Calu3 (cell line): ENCODE measurements at regions of chr22 and their contacts with region 1.

Region 1: DNA sequence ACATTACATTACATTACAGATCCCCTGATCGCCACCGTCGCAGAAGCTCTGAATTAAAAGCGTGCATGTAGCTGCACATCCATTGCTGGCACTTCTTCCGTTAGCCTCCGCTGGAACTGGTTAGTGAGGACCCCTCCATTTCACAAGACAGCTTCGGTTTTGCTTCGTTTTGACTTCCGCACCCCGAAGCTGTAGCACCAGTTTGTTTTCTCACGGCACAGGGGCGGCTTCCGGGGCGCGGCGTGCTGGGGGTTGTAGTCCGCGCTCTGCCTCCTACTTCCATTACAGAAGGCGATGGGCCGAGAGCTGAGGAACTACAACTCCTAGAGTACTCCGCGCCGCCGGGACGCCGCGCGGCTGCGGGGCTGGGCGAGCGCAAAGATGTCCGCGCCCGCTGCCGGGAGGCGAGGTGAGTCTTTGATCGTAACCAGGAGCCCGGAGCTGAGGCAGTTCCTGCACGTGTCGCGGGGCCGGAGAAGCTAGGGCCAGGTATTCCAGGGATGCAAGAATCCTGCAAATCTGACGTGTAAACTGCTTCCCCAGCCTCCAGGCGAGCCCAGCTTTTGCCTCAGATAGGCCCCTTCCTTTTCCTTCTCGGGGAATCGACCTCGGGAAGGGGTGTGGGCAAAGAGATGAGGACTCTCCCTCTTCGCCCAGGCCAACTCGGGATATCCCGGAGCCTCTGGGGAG is at the start of gene PEX26:
- DNase-seq: peak; percentile 95
- H3K4me3 Mint-ChIP-seq: peak within 1 kb of the TSS; percentile 98
- H3K27ac Mint-ChIP-seq: peak within 1 kb of the TSS; percentile 92
- H3K4me1 Mint-ChIP-seq: peaks cover 40% of the 10 kb centered on the region
- H3K27me3 Mint-ChIP-seq: no peaks in the 10 kb centered on the region
- CTCF ChIP-seq: no peak
- total RNA-seq, gene PEX26: 46.1 and 47.0 TPM in 2 replicates

Region 2: DNA sequence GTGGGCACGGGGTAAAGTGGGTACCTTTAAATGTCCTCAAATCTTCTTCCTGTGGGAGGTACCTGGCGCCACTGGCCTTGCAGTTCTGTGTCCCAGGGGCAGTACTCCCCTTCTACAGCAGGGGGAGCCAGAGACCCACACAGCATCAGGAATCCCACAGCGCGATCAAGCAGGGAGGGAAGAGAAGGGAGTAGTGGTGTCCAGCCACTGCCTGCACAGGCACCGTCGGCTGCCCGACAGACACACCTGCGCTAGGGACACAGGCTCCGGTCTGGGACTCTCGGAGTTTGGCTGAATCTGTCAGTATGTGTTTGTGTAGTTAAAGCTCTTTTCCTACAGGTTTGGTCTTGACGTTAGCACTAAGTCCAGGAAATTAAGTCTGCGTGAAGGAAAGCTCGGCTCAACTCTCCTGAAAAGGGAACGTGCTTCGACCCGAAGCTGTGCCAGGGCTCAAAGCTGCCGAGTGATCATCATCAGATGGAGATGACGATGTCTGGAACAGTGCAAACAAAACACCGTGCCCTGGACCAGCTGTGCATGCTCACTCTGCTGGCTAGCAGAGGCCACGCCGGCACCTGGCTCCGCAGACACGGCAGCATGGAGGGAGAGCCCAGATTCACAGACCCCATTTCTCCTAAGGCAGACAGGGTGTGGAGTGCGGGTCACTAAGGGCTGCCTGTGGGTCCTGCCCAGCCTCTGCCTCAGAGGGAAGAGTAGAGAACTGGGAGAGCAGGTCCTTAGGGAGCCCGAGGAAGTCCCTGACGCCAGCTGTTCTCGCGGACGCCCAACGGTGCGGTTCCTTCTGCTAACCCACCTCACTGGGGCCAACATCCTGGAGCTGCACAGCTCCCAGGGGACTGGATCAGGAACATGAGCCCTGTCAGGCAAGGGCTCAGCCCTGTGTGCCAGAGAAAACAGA is 247.5 kb before region 1 on chr22:
- CTCF ChIA-PET with region 1: interaction called, 44 read pairs
- intact Hi-C with region 1: loop called (anchors 1 kb)
- DNase-seq: peak; percentile 91
- H3K4me3 Mint-ChIP-seq: no peak overlapping the region
- H3K27ac Mint-ChIP-seq: no peak overlapping the region
- H3K4me1 Mint-ChIP-seq: no peaks in the 10 kb centered on the region
- H3K27me3 Mint-ChIP-seq: no peaks in the 10 kb centered on the region
- CTCF ChIP-seq: peak; percentile 98

Region 3: GRCh38 chr22:17891481-17892167 is 186.2 kb before region 1 on chr22:
- CTCF ChIA-PET with region 1: interaction called, 5 read pairs
- intact Hi-C with region 1: loop called (anchors 10 kb)
- DNase-seq: no peak
- H3K4me3 Mint-ChIP-seq: no peak overlapping the region
- H3K27ac Mint-ChIP-seq: no peak overlapping the region
- H3K4me1 Mint-ChIP-seq: peaks cover 11% of the 10 kb centered on the region
- H3K27me3 Mint-ChIP-seq: no peaks in the 10 kb centered on the region
- CTCF ChIP-seq: no peak

Region 4: GRCh38 chr22:17920145-17920605 is 157.6 kb before region 1 on chr22:
- CTCF ChIA-PET with region 1: interaction called, 10 read pairs
- intact Hi-C with region 1: loop called (anchors 5 kb)
- DNase-seq: peak; percentile 55
- H3K4me3 Mint-ChIP-seq: peak overlapping the region; percentile 32
- H3K27ac Mint-ChIP-seq: peak overlapping the region; percentile 42
- H3K4me1 Mint-ChIP-seq: peaks cover 54% of the 10 kb centered on the region
- H3K27me3 Mint-ChIP-seq: no peaks in the 10 kb centered on the region
- CTCF ChIP-seq: no peak

Region 5: GRCh38 chr22:18001040-18001893 is 76.5 kb before region 1 on chr22:
- CTCF ChIA-PET with region 1: interaction called, 24 read pairs
- intact Hi-C with region 1: loop called (anchors 2 kb)
- DNase-seq: peak; percentile 91
- H3K4me3 Mint-ChIP-seq: peak overlapping the region; percentile 70
- H3K27ac Mint-ChIP-seq: peak overlapping the region; percentile 91
- H3K4me1 Mint-ChIP-seq: peaks cover 36% of the 10 kb centered on the region
- H3K27me3 Mint-ChIP-seq: no peaks in the 10 kb centered on the region
- CTCF ChIP-seq: peak; percentile 47

Region 6: DNA sequence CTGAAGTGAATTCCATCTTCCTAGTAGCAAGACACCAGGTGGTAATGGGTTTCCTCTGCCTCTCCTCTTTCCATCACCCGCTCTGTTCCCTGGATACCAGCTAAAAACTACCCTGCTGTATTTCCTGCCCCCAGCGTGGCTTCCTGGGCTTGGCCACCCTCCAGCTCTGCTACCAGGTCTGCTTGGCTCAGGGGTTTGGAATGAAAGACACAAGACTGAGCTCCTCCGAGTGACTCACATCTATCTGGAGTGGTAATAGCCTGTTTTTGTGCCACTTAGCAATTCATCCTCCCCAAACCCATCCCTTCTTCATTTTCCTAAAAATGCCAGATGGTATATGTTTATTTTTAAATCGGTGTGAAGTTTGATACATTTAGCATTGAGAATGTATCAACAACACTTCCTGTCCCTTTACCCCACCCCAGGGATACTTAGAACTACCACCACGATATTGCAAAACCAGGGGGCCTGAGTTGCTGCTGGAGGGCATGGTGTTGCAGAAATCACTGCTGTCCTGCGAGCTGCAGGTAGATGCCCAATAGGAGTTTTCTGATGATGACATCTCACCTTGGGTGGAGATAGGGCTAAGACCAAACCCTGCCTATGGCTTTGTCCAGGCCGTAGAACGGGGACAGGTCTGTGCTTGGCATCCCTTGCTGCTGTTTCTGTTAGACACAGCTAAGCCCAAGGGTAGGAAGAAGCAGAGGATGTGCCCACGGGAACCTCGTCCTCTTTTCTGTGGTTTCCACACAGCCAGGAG is 45.9 kb before region 1 on chr22:
- CTCF ChIA-PET with region 1: interaction called, 10 read pairs
- intact Hi-C with region 1: loop called (anchors 5 kb)
- DNase-seq: peak; percentile 87
- H3K4me3 Mint-ChIP-seq: no peak overlapping the region
- H3K27ac Mint-ChIP-seq: peak overlapping the region; percentile 41
- H3K4me1 Mint-ChIP-seq: peaks cover 51% of the 10 kb centered on the region
- H3K27me3 Mint-ChIP-seq: no peaks in the 10 kb centered on the region
- CTCF ChIP-seq: no peak

Region 7: DNA sequence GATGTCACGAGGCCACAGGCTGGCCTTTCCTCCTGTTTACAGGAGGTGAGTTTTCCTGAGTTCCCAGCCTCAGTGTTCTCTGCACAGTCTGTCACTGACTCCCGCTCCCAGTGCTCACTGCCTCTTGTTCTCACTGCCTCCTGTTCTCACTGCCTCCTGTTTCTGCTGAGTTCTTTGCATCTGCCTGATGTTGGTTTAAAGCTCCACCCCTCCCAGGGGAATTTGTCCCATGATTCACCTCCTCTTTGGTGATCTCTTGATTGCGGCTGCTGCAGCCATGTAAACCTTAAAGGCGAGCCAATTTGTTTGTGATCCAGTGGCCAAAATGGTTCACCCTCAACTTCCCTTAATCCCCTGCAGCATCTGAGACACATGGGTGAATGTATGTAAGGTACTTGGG is 26.8 kb after region 1 on chr22:
- CTCF ChIA-PET with region 1: no interaction called
- intact Hi-C with region 1: no loop called
- DNase-seq: no peak
- H3K4me3 Mint-ChIP-seq: no peak overlapping the region
- H3K27ac Mint-ChIP-seq: no peak overlapping the region
- H3K4me1 Mint-ChIP-seq: peaks cover 3% of the 10 kb centered on the region
- H3K27me3 Mint-ChIP-seq: peaks cover 6% of the 10 kb centered on the region
- CTCF ChIP-seq: no peak